ENCODE measurements at regions of chr13 and their contacts with region 1.

Region 1: DNA sequence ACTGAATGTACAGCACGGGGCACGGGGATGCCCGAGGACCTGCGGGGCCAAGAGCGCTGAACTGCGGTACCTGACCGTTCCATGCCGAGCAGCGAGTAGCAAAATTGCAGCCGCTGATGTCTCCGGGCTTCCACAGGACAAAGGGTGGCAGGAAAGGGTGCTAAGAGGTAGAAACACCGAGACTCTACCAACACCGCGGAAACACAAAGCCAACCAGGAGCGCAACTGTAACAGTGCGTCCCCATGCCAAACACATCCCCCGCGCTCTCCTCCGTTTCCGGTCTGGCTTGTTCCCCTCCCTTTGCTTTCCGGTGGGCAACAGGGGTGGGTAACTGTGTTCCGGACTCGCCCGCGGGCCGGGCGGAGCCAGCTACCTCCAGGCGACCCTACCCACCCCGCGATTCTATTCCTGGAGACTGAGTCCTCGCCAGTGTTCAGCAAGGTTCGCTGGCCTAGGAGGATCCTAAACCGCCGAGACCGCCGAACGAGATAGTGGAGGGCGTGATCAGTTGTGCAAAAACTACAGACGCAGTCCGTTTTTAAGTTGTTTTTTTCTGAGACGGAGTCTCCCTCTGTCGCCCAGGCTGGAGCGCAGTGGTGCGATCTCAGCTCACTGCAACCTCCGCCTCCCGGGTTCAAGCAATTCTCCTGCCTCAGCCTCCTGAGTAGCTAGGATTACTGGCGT is 34.9 kb upstream of the NEK3 start:
- DNase-seq: peak; percentile 91
- ATAC-seq: peak; percentile 84
- H3K4me3 ChIP-seq: peak overlapping the region; percentile 69 to 97 (median 95)
- H3K4me3 Mint-ChIP-seq: peak overlapping the region; percentile 99
- H3K27ac ChIP-seq: peak overlapping the region; percentile 57 to 75
- H3K27ac Mint-ChIP-seq: peak overlapping the region; percentile 98
- H3K4me1 ChIP-seq: peaks cover 8 to 16% of the 10 kb centered on the region in 2 donors
- H3K4me1 Mint-ChIP-seq: peaks cover 21% of the 10 kb centered on the region
- H3K27me3 ChIP-seq: no peaks in the 10 kb centered on the region
- H3K27me3 Mint-ChIP-seq: no peaks in the 10 kb centered on the region
- CTCF ChIP-seq: no peak

Region 2: DNA sequence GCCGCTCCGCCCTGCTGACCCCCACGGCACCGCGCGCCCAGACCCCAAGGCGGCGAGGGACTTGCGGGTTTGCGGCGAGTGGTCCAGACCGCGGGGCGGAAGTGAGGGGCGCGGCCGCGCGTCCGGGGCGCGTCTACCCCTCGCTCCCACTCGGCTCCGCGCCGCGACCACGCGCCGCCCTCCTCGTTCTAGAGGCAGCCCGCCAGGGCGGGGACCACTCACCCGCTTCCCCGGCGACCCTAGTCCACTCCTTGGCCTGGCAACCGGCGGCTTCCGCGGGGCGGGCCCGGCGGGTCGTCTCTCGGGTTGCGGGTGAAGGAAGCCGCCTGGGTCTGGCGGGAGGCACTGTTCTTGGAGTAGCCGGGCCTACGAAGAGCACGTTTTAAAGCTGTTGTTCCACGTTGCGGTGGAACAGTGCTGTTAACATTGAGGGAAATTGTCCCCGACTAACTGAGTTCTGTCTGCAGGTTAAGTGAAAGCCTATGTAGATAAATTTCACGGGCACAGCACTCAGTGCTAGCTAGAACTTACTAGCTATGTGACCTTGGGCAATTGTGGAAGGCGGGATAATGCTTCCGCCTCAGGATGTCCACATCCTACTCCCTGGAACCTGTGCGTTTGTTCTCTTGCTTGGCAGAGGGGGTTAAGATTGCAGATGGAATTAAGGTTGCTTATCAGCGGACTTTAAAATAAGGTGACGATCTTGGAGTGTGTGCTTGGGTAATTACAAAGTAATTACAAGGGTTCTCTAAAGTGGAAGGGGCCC is 34.8 kb before region 1 on chr13 and contains the start of gene NEK3:
- CTCF ChIA-PET with region 1: interaction called, 3 read pairs
- POLR2A ChIA-PET with region 1: no interaction called
- intact Hi-C with region 1: loop called (anchors 1 kb)
- DNase-seq: peak; percentile 67
- ATAC-seq: peak; percentile 80
- H3K4me3 ChIP-seq: peak within 1 kb of the TSS; percentile 52 to 74 (median 72)
- H3K4me3 Mint-ChIP-seq: peak within 1 kb of the TSS; percentile 91
- H3K27ac ChIP-seq: peak within 1 kb of the TSS; percentile 13 to 50
- H3K27ac Mint-ChIP-seq: peak within 1 kb of the TSS; percentile 76
- H3K4me1 ChIP-seq: peaks cover 13% of the 10 kb centered on the region in 2 donors
- H3K4me1 Mint-ChIP-seq: peaks cover 20% of the 10 kb centered on the region
- H3K27me3 ChIP-seq: no peaks in the 10 kb centered on the region
- H3K27me3 Mint-ChIP-seq: no peaks in the 10 kb centered on the region
- CTCF ChIP-seq: no peak
- total RNA-seq, gene NEK3: 11.5 and 12.6 TPM in 2 replicates

Region 3: GRCh38 chr13:53537586-53537985 is 1343.3 kb after region 1 on chr13:
- CTCF ChIA-PET with region 1: no interaction called
- POLR2A ChIA-PET with region 1: no interaction called
- intact Hi-C with region 1: no loop called
- DNase-seq: no peak
- ATAC-seq: no peak
- H3K4me3 ChIP-seq: no peak overlapping the region
- H3K4me3 Mint-ChIP-seq: no peak overlapping the region
- H3K27ac ChIP-seq: no peak overlapping the region
- H3K27ac Mint-ChIP-seq: no peak overlapping the region
- H3K4me1 ChIP-seq: no peaks in the 10 kb centered on the region
- H3K4me1 Mint-ChIP-seq: no peaks in the 10 kb centered on the region
- H3K27me3 ChIP-seq: no peaks in the 10 kb centered on the region
- H3K27me3 Mint-ChIP-seq: no peaks in the 10 kb centered on the region
- CTCF ChIP-seq: no peak